ENCODE measurements at regions of chr3 and their contacts with region 1.

Region 1: GRCh38 chr3:108145578-108145977 is 54.7 kb upstream of the CD47 start:
- DNase-seq: no peak
- ATAC-seq: no peak
- H3K4me3 ChIP-seq: no peak overlapping the region
- H3K4me3 Mint-ChIP-seq: no peak overlapping the region
- H3K27ac ChIP-seq: no peak overlapping the region
- H3K27ac Mint-ChIP-seq: no peak overlapping the region
- H3K4me1 ChIP-seq: no peaks in the 10 kb centered on the region
- H3K4me1 Mint-ChIP-seq: peaks cover 0 to 8% (median 5%) of the 10 kb centered on the region in 3 donors
- H3K27me3 ChIP-seq: no peaks in the 10 kb centered on the region
- H3K27me3 Mint-ChIP-seq: no peaks in the 10 kb centered on the region

Region 2: GRCh38 chr3:108497271-108497670 is 351.7 kb after region 1 on chr3:
- CTCF ChIA-PET with region 1: no interaction called
- POLR2A ChIA-PET with region 1: interaction called in 1 of 2 experiments, 11 read pairs
- DNase-seq: no peak
- ATAC-seq: no peak
- H3K4me3 ChIP-seq: no peak overlapping the region
- H3K4me3 Mint-ChIP-seq: no peak overlapping the region
- H3K27ac ChIP-seq: no peak overlapping the region
- H3K27ac Mint-ChIP-seq: no peak overlapping the region
- H3K4me1 ChIP-seq: no peaks in the 10 kb centered on the region
- H3K4me1 Mint-ChIP-seq: no peaks in the 10 kb centered on the region
- H3K27me3 ChIP-seq: no peaks in the 10 kb centered on the region
- H3K27me3 Mint-ChIP-seq: no peaks in the 10 kb centered on the region

Measured in T-cell (primary cell).